PC-9 (cell line): ENCODE measurements at regions of chr1 and their contacts with region 1.

Region 1: DNA sequence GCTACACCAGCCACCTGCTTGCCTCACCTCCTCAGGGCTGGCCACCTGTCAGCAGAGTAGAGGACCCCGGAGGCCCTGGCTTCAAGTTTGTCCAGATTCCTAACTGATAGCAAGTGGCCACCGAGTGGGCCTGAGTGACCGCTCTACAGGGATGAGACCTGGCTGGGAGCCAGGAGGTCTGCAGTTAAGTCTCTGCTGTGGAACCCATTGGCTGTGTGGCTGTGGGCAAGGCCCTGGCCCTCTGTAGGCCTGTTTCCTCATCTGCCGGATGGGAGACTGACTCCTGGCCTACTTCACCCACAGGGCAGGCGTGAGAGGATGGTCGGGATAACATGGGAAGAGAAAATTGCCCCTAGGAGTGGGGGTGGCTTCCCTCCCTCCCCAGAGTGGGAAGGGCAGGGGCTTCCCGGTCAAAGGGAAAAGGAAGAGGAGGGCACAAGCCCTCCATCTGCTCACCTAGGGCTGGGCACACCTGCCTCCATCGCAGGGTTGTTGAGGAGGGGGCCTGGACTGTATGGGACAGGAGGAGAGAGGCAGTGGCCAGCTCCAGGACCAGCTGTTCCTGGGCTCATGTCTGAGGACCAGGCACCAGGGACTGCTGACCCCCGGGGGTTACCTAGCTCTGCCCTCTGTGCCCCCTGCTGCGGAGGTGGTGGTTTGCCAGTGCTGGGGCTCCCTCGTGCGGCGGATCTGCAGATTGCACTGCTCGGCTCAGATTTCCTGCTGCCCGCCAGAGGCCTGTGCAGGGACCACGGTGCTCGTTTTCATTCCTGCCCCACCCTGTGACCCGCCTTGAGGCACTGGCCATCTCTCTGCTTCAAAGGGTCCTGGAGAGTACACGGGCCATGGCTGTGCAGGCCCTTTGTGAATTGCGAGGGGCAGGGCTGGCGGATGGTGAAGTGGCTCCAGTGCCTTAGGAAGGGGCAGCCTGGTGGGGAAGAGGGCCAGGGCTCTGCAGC is 9.1 kb upstream of the MTFR1L start:
- DNase-seq: peak in 1 of 2 experiments; percentile 71
- H3K4me3 ChIP-seq: no peak overlapping the region
- H3K27ac ChIP-seq: no peak overlapping the region
- H3K4me1 ChIP-seq: no peaks in the 10 kb centered on the region
- H3K27me3 ChIP-seq: no peaks in the 10 kb centered on the region
- CTCF ChIP-seq: peak; percentile 89

Region 2: GRCh38 chr1:25503551-25504426 is 306.8 kb before region 1 on chr1:
- CTCF ChIA-PET with region 1: no interaction called
- POLR2A ChIA-PET with region 1: no interaction called
- intact Hi-C with region 1: loop called (anchors 5 kb)
- DNase-seq: peak; percentile 53 to 76
- H3K4me3 ChIP-seq: no peak overlapping the region
- H3K27ac ChIP-seq: no peak overlapping the region
- H3K4me1 ChIP-seq: peaks cover 21% of the 10 kb centered on the region
- H3K27me3 ChIP-seq: no peaks in the 10 kb centered on the region
- CTCF ChIP-seq: peak; percentile 66

Region 3: DNA sequence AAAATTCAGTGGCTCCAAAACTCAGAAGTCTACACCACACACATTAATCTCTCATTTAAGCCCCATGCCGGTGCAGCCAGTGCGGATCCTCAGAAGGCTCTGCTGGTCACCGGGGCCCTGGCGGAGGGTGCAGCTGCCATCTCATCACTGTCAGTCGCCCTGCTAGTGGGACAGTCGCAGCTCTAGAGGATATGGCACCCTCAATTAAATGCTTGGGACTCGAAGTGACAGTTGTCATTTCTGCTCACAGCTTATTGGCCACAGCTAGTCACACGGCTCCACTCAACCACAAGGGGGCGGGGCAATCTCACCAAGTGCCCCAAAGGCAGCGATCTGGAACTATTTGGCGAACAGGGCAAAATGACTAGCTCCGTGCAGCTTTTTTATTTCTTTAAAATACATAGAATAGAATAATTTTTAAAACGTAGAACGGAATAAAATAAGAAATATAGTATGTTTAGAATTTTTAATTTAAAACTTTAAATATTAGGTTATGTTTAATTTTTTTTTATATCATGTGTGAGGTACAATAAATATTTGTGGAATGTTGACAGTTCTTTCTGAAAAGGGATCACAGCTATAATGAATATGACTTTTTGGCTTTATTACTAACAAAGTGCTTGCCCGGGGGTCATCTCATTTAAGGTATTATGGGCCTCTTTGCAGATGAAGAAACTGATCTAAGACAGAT is 202.0 kb before region 1 on chr1:
- CTCF ChIA-PET with region 1: no interaction called
- POLR2A ChIA-PET with region 1: no interaction called
- intact Hi-C with region 1: loop called (anchors 2 kb)
- DNase-seq: peak; percentile 43 to 69
- H3K4me3 ChIP-seq: no peak overlapping the region
- H3K27ac ChIP-seq: no peak overlapping the region
- H3K4me1 ChIP-seq: peaks cover 5% of the 10 kb centered on the region; the same call in 1 of the 2 replicates
- H3K27me3 ChIP-seq: no peaks in the 10 kb centered on the region
- CTCF ChIP-seq: peak; percentile 63

Region 4: GRCh38 chr1:25743826-25744581 is 66.6 kb before region 1 on chr1:
- CTCF ChIA-PET with region 1: no interaction called
- POLR2A ChIA-PET with region 1: no interaction called
- intact Hi-C with region 1: no loop called
- DNase-seq: peak in 1 of 2 experiments; percentile 28
- H3K4me3 ChIP-seq: no peak overlapping the region
- H3K27ac ChIP-seq: no peak overlapping the region
- H3K4me1 ChIP-seq: no peaks in the 10 kb centered on the region
- H3K27me3 ChIP-seq: no peaks in the 10 kb centered on the region
- CTCF ChIP-seq: peak; percentile 40; the same call in 1 of the 2 replicates